Sciatic nerve (tissue), 2 donors: ENCODE measurements at regions of chr1 and their contacts with region 1.

Region 1: DNA sequence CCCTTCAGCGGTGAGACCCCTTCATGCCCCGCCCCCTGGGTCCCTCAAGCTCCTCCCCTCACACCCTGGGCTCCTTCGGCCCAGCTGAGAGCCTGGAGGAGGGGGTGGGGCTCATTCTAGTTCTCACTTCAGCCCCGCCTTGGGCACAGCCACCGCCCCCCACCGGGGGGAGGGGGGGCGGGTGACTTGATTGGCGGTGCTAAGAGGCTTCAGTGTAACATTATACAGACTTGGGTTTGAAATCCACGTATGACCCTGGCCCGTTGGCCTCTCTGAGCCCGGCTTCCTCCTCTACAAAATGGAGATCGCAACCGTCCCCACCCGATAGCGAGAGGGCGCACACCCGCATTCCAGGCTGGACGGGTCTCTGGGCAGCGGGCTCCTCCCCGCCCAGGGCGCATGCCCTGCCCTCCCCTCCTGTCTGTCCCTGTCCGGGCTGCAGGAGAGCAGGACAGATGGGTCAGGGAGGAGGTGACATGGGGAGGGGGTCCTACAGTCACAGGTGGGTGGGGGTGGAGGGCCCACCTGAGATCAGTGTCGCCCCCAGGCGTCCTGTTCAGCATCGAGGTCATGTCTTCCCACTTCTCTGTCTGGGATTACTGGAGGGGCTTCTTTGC is 5.1 kb downstream of the CLCNKB start:
- DNase-seq: peak; percentile 75
- ATAC-seq: peak; percentile 67

Region 2: GRCh38 chr1:14039582-14040430 is 2008.9 kb before region 1 on chr1:
- intact Hi-C with region 1: loop called (anchors 10 kb)
- DNase-seq: no peak
- ATAC-seq: no peak